Dendritic cell treated with granulocyte-macrophage colony-stimulating factor and Interleukin-4, amounts not matched to agents 40 ng/mL and 50 ng/mL, for 4 days (primary cell): ENCODE measurements at regions of chr10 and their contacts with region 1.

Region 1: DNA sequence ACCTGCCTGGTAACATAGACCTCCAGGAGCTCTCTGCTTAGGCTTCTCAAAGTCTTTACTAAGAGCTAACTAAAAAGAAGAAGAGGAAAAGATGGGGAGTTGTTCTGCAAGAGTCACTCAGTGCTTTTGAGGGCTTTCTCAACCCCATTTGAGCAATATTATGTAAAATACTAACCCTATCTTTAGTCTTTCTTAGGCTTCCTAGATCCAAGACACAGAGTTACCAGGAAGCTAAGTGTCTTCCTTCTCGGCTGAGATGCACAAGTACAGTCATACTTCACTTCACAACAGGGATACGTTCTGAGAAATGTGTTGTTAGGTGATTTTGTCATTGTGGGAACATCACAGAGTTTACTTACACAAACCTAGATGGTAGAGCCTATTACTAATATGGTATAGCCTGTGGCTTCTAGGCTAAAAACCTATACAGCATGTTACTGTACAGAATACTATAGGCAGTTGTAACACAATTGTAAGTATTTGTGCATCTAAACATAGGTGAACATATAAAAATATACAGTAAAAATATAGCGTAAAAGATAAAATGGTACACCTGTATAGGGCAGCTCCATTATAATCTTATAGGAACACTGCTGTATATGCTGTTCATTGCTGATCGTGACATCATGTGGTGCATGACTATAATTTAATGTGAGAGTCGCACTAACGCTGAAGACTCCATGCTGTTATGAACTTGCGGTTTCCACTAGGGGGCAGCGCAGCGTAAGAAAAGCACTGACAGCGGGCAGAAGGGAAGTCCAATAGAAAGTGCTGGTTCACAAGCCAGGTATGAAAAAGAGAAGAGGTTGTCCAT is 16.3 kb downstream of the ANKRD22 start:
- H3K4me3 Mint-ChIP-seq: no peak overlapping the region
- H3K27ac Mint-ChIP-seq: no peak overlapping the region
- H3K4me1 Mint-ChIP-seq: peaks cover 14% of the 10 kb centered on the region
- H3K27me3 Mint-ChIP-seq: no peaks in the 10 kb centered on the region

Region 2: GRCh38 chr10:88401671-88402347 is 433.5 kb before region 1 on chr10:
- intact Hi-C with region 1: no loop called
- H3K4me3 Mint-ChIP-seq: no peak overlapping the region
- H3K27ac Mint-ChIP-seq: no peak overlapping the region
- H3K4me1 Mint-ChIP-seq: peaks cover 9% of the 10 kb centered on the region
- H3K27me3 Mint-ChIP-seq: no peaks in the 10 kb centered on the region

Region 3: DNA sequence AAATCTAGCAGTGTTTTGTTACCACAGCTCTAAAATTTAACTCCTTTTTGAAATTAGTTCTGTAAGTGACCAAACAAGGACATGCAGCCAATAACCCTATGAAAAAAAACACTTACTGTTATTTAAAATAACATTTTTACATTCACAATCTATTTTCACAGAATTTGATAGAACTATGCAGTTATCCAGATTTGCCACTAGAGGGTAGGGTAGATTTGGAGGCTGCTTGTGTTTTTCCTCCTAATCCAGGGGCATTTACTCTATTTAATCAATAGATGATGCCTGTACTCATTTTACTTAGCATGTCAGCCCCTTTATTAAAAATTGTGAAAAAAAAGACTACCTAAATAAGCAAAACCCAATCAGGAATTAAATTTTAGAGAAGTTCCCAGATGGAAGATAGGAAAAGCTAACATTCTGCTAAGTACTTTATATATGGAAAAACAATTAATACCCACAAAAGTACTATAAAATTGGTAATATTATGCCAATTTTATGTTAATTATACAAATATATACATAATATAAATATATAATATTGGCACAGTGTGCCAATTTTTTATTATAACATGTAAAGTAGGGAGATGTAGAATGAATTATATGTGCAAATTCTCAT is 147.3 kb before region 1 on chr10:
- intact Hi-C with region 1: no loop called
- H3K4me3 Mint-ChIP-seq: no peak overlapping the region
- H3K27ac Mint-ChIP-seq: no peak overlapping the region
- H3K4me1 Mint-ChIP-seq: no peaks in the 10 kb centered on the region
- H3K27me3 Mint-ChIP-seq: peaks cover 5% of the 10 kb centered on the region

Region 4: GRCh38 chr10:88851706-88852105 is 16.4 kb after region 1 on chr10 and contains the start of gene ANKRD22:
- intact Hi-C with region 1: no loop called
- H3K4me3 Mint-ChIP-seq: peak within 1 kb of the TSS; percentile 55
- H3K27ac Mint-ChIP-seq: peak within 1 kb of the TSS; percentile 74
- H3K4me1 Mint-ChIP-seq: peaks cover 69% of the 10 kb centered on the region
- H3K27me3 Mint-ChIP-seq: no peaks in the 10 kb centered on the region

Region 5: GRCh38 chr10:88865281-88865876 is 30.1 kb after region 1 on chr10:
- intact Hi-C with region 1: loop called (anchors 1 kb)
- H3K4me3 Mint-ChIP-seq: no peak overlapping the region
- H3K27ac Mint-ChIP-seq: no peak overlapping the region
- H3K4me1 Mint-ChIP-seq: peaks cover 27% of the 10 kb centered on the region
- H3K27me3 Mint-ChIP-seq: no peaks in the 10 kb centered on the region

Region 6: GRCh38 chr10:88996927-88997326 is 161.6 kb after region 1 on chr10:
- intact Hi-C with region 1: loop called (anchors 5 kb)
- H3K4me3 Mint-ChIP-seq: no peak overlapping the region
- H3K27ac Mint-ChIP-seq: no peak overlapping the region
- H3K4me1 Mint-ChIP-seq: peaks cover 37% of the 10 kb centered on the region
- H3K27me3 Mint-ChIP-seq: no peaks in the 10 kb centered on the region

Region 7: DNA sequence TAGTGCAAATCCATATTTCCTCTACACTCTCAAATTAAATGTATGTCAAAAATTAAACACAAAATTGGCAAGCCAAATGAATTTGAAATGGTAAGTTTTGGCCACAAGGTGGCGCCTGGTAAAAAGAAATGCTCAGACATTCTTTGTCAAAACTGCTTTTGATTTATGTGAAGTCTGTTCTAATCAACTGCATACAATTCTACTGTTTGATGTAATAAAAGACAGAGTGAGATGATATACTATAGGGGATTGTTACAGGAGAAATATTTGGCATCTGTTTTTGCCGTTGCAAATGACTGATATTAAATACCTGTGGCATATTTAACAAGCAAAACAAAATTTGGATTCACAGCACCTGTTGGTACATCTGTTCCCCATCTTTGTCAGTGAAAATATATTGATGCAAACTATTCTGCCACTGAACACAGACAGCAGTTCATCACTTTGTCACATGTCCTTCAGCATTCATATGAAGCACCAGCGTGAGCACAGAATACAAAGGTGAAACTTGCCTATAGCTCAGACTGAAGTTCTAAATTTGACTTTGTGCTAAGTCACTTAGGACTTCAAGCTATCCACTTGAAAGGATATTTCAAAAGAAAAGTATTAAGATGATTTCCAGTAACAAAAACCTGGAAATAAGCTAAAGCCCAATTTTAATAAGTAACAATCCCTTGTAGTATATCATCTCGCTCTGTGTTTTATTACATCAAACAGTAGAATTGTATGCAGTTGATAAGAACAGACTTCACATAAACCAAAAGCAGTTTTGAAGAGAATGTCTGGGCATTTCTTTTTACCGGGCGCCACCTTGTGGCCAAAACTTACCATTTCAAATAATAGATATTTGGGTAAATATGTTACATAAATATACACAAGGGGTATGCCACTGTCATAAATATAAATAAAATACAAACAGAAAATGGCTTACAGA is 382.0 kb after region 1 on chr10:
- intact Hi-C with region 1: loop called (anchors 5 kb)
- H3K4me3 Mint-ChIP-seq: no peak overlapping the region
- H3K27ac Mint-ChIP-seq: no peak overlapping the region
- H3K4me1 Mint-ChIP-seq: peaks cover 25% of the 10 kb centered on the region
- H3K27me3 Mint-ChIP-seq: peaks cover 1% of the 10 kb centered on the region